Activated B cell treated with CpG ODN at 0.5 μM for 24 hours (primary cell): ENCODE measurements at regions of chr12 and their contacts with region 1.

Region 1: DNA sequence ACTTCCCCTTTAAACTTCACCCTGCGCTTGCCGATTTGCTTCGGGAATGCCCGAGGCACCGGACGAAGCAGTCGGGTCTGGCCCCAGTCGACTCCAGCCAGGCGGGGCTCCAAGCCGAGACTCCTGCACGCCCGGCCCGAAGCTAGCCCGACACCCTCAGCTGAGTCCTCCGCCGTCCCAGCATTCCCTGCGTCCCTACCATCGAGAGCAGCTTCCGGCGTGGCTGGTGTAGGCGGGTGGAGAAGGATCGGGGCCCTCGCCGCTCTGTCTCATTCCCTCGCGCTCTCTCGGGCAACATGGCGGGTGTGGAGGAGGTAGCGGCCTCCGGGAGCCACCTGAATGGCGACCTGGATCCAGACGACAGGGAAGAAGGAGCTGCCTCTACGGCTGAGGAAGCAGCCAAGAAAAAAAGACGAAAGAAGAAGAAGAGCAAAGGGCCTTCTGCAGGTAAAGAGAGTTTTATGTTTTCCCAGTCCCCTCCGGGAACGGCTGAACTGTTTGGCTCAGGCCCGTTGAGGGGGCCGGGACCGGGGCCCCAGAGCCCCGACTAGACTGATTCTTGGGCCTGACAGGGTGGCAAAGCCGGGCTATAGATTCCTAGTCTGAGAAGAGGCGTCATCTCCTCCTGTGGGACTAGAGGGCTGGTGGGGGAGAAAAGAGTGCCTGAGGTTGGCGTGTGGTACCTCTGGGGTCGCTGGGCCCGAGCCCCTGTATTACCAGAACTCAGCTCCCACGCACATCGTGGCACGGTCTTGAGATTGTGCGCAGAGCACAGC is at the start of gene METAP2:
- DNase-seq: peak; percentile 87
- ATAC-seq: peak; percentile 97
- H3K4me3 Mint-ChIP-seq: peak within 1 kb of the TSS; percentile 100
- H3K27ac Mint-ChIP-seq: peak within 1 kb of the TSS; percentile 99
- H3K4me1 Mint-ChIP-seq: peaks cover 51% of the 10 kb centered on the region
- H3K27me3 Mint-ChIP-seq: peaks cover 2% of the 10 kb centered on the region
- CTCF ChIP-seq: no peak
- total RNA-seq, gene METAP2: 63.0 and 67.4 TPM in 2 replicates

Region 2: DNA sequence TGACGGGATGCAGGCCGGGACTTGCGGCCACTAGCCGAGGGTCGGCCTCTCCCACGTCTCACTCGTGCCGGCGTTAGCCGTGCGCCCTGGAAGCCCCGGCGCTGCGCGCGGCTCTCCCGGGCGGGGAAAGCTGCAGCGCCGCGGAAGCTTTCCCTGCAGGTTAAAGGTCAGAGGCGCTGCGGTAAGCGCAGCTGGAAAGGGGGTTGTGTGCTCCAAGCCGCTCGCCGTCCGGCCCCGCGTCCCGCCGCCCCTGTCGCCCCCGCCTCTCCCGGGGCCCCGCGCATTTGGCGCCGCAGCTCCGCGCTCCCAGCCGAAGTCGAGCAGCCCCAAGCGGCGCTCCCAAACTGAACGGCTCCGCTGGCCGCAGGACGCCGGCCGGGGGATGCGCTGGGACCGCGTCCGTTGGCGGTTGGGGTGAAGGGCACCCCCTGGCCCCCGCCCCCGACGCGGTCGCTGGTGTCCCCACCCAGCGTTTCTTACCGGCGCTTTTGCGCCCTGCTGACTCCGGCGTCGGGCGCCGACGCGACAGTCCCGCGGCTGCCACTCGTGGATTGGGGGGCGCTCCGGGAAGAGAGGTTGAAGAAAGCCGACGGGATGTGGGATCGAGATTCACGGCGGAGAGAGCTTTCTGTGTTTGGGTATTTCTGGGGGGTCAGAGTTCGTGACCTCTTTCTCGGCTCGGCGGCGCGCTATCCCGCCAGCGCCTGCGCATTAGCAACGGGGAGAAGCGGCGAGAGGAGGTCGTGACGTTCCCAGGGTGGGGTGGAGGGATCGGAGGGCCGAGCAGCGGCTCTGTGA is 401.0 kb before region 1 on chr12 and contains the start of gene NR2C1:
- CTCF ChIA-PET with region 1: no interaction called
- POLR2A ChIA-PET with region 1: interaction called, 21 read pairs
- intact Hi-C with region 1: loop called (anchors 1 kb)
- DNase-seq: peak; percentile 83
- ATAC-seq: peak; percentile 99
- H3K4me3 Mint-ChIP-seq: peak within 1 kb of the TSS; percentile 97
- H3K27ac Mint-ChIP-seq: peak within 1 kb of the TSS; percentile 94
- H3K4me1 Mint-ChIP-seq: peaks cover 13% of the 10 kb centered on the region
- H3K27me3 Mint-ChIP-seq: no peaks in the 10 kb centered on the region
- CTCF ChIP-seq: no peak
- total RNA-seq, gene NR2C1: 28.3 and 30.8 TPM in 2 replicates

Region 3: DNA sequence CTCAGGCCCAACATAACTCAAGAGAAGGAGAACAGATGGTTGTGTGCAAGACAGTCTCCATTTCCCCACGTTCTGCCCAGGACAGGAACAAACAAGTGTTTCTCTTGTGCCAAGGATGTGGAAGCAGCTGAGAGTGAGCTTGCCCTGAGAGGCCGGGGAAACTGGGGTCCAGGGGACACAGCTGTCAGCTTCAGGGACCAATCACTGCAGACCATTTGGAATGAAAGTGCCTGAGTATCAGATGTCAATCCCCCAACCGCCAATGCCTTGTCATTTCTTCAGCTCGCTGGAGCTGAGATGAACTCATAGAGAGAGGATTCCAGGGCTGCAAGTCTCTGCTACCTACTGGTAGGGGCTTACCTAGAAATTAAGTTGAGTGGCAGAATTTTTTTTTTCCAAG is 72.0 kb before region 1 on chr12:
- CTCF ChIA-PET with region 1: no interaction called
- POLR2A ChIA-PET with region 1: no interaction called
- intact Hi-C with region 1: no loop called
- DNase-seq: no peak
- ATAC-seq: no peak
- H3K4me3 Mint-ChIP-seq: no peak overlapping the region
- H3K27ac Mint-ChIP-seq: no peak overlapping the region
- H3K4me1 Mint-ChIP-seq: no peaks in the 10 kb centered on the region
- H3K27me3 Mint-ChIP-seq: peaks cover 8% of the 10 kb centered on the region
- CTCF ChIP-seq: no peak

Region 4: DNA sequence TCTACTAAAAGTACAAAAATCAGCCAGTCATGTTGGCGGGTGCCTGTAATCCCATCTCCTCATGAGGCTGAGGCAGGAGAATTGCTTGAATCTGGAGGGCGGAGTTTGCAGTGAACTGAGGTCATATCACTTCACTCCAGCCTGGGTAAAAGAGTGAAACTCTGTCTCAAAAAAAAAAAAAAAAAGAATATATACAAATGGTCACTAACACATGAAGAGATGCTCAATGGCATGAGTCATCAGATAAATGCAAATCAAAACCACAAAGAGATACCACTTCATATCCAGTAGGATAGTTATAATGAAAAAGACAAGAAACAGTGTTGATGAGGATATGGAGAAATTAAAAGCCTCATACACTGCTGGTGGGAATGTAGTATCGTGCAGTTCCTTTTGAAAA is 33.7 kb before region 1 on chr12:
- CTCF ChIA-PET with region 1: no interaction called
- POLR2A ChIA-PET with region 1: interaction called, 12 read pairs
- intact Hi-C with region 1: no loop called
- DNase-seq: no peak
- ATAC-seq: peak; percentile 25
- H3K4me3 Mint-ChIP-seq: no peak overlapping the region
- H3K27ac Mint-ChIP-seq: no peak overlapping the region
- H3K4me1 Mint-ChIP-seq: peaks cover 22% of the 10 kb centered on the region
- H3K27me3 Mint-ChIP-seq: peaks cover 11% of the 10 kb centered on the region
- CTCF ChIP-seq: no peak

Region 5: DNA sequence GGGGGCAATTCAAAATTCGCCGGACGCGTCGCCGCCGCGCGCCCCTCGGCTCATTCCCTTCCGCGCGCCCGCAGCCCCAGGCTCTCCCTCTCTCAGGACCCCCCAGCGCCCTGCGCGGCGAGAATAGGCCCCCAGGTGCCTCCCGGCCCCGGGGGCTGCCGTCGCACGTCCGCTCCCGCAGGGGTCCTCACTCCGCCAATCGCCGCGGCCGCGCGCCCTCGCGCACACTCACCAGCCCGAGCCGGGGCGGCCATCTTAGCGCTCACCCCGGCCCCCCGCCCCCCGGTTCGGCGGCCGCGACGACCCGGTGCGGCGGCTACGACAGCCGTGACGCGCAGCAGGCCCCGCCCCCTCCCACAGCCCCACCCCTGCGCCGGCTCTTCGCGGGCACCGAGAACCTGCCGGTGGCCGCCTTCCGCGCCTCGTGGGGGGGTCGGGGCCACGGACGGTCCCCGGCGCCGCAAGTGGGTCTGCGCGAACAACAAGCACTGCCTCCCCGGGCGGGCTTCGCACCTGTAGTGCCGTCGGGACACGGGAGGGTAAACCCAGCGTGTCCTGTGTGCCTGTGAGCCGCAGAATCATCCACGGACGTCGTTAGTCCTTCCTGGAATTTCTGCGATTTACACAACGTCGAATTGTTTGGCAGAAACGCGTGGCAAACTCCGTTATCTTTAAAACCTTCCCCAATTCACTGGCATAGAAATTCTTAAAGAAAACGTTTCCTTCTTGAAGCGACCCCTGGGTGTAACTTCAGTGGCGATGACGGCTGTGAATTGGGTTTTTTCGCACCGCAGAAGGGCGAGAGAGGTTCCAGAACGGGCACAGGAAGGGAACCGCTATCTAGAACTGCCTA is 74.7 kb after region 1 on chr12:
- CTCF ChIA-PET with region 1: no interaction called
- POLR2A ChIA-PET with region 1: interaction called, 6 read pairs
- intact Hi-C with region 1: loop called (anchors 1 kb)
- DNase-seq: peak; percentile 64
- ATAC-seq: peak; percentile 86
- H3K4me3 Mint-ChIP-seq: peak overlapping the region; percentile 91
- H3K27ac Mint-ChIP-seq: peak overlapping the region; percentile 73
- H3K4me1 Mint-ChIP-seq: peaks cover 22% of the 10 kb centered on the region
- H3K27me3 Mint-ChIP-seq: no peaks in the 10 kb centered on the region
- CTCF ChIP-seq: no peak

Region 6: GRCh38 chr12:95858479-95859343 is 384.6 kb after region 1 on chr12 and contains the start of gene SNRPF:
- CTCF ChIA-PET with region 1: no interaction called
- POLR2A ChIA-PET with region 1: no interaction called
- intact Hi-C with region 1: loop called (anchors 1 kb)
- DNase-seq: peak; percentile 85
- ATAC-seq: peak; percentile 97
- H3K4me3 Mint-ChIP-seq: no peak within 1 kb of the TSS
- H3K27ac Mint-ChIP-seq: peak within 1 kb of the TSS; percentile 4
- H3K4me1 Mint-ChIP-seq: peaks cover 12% of the 10 kb centered on the region
- H3K27me3 Mint-ChIP-seq: peaks cover 8% of the 10 kb centered on the region
- CTCF ChIP-seq: no peak
- total RNA-seq, gene SNRPF: 35.2 and 38.2 TPM in 2 replicates